ENCODE measurements at regions of chr12 and their contacts with region 1.

Region 1: DNA sequence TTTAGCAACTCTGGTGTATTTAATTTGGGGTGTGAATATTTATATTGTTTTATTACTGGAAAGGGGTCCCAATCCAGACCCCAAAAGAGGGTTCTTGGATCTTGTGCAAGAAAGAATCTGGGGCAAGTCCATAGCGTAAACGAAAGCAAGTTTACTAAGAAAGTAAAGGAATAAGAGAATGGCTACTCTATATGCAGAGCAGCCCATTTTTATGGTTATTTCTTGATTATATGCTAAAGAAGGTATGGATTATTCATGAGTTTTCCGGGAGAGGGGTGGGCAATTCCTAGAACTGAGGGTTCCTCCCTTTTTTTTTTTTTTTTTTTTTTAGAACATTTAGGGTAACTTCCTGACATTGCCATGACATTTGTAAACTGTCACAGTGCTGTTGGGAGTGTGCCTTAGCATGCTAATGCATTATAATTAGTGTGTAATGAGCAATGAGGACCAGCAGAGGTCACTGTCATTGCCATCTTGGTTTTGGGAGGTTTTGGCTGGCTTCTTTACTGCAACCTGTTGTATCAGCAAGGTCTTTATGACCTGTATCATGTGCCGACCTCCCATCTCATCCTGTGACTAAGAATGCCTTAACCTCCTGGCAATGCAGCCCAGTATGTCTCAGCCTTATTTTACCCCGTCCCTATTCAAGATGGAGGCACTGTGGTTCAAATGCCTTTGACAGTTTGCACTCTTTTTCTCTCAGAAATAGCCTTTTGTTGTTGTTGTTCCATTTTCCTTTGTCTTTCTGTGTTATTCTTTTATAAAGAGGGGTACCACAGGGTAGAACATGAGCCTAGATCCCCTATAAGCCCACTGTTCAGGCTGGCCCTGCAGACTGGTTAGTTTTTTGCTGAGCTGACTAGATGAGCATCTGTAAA is 75.5 kb upstream of the DCD start:
- DNase-seq: no peak
- H3K4me3 ChIP-seq: no peak overlapping the region
- H3K27ac ChIP-seq: no peak overlapping the region
- H3K4me1 ChIP-seq: peaks cover 0 to 5% (median 3%) of the 10 kb centered on the region in 4 experiments; a peak in 2 of 7 replicates
- H3K27me3 ChIP-seq: no peaks in the 10 kb centered on the region
- CTCF ChIP-seq: peak in 2 of 3 experiments; percentile 59 to 68; a peak in 3 of 4 replicates
- EP300 ChIP-seq: no peak
- POLR2A ChIP-seq: no peak
- RAD21 ChIP-seq: peak; percentile 21 to 39; a peak in 3 of 4 replicates

Region 2: GRCh38 chr12:54734196-54734950 is 10.8 kb after region 1 on chr12:
- CTCF ChIA-PET with region 1: interaction called, 21 read pairs
- POLR2A ChIA-PET with region 1: no interaction called
- DNase-seq: no peak
- H3K4me3 ChIP-seq: no peak overlapping the region
- H3K27ac ChIP-seq: no peak overlapping the region
- H3K4me1 ChIP-seq: peaks cover 0 to 7% (median 3%) of the 10 kb centered on the region in 4 experiments; a peak in 2 of 7 replicates
- H3K27me3 ChIP-seq: no peaks in the 10 kb centered on the region
- CTCF ChIP-seq: no peak
- EP300 ChIP-seq: no peak
- POLR2A ChIP-seq: no peak
- RAD21 ChIP-seq: no peak

Region 3: GRCh38 chr12:54740882-54741281 is 17.3 kb after region 1 on chr12:
- CTCF ChIA-PET with region 1: interaction called, 21 read pairs
- POLR2A ChIA-PET with region 1: no interaction called
- DNase-seq: no peak
- H3K4me3 ChIP-seq: no peak overlapping the region
- H3K27ac ChIP-seq: no peak overlapping the region
- H3K4me1 ChIP-seq: no peaks in the 10 kb centered on the region
- H3K27me3 ChIP-seq: no peaks in the 10 kb centered on the region
- CTCF ChIP-seq: no peak
- EP300 ChIP-seq: no peak
- POLR2A ChIP-seq: no peak
- RAD21 ChIP-seq: no peak

Region 4: GRCh38 chr12:54759751-54760150 is 36.1 kb after region 1 on chr12:
- CTCF ChIA-PET with region 1: interaction called, 12 read pairs
- POLR2A ChIA-PET with region 1: no interaction called
- DNase-seq: peak; percentile 25 to 44
- H3K4me3 ChIP-seq: no peak overlapping the region
- H3K27ac ChIP-seq: no peak overlapping the region
- H3K4me1 ChIP-seq: no peaks in the 10 kb centered on the region
- H3K27me3 ChIP-seq: no peaks in the 10 kb centered on the region
- CTCF ChIP-seq: peak in 2 of 3 experiments; percentile 73 to 90; a peak in 3 of 4 replicates
- EP300 ChIP-seq: no peak
- POLR2A ChIP-seq: no peak
- RAD21 ChIP-seq: peak; percentile 93 to 97

Region 5: DNA sequence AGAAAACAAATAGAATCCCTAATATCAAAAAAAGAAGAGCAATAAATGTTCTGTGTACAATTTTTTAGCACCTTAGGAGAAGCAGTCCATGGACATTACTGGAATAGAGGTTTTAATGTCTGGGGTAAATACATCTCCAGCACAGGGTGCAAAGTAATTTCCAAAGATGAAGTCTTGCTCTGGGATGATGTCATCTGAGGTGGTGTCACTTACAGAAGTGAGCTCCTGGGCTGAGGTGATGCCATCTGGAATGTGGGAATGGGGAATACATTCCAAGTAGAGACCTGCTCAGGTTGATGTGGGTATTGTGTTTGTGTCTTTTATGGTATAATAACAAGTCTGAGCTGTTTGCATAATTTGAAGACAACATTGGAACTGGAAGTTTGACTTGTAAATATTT is 51.8 kb after region 1 on chr12:
- CTCF ChIA-PET with region 1: no interaction called
- POLR2A ChIA-PET with region 1: no interaction called
- DNase-seq: no peak
- H3K4me3 ChIP-seq: no peak overlapping the region
- H3K27ac ChIP-seq: no peak overlapping the region
- H3K4me1 ChIP-seq: no peaks in the 10 kb centered on the region
- H3K27me3 ChIP-seq: no peaks in the 10 kb centered on the region
- CTCF ChIP-seq: no peak
- EP300 ChIP-seq: no peak
- POLR2A ChIP-seq: no peak
- RAD21 ChIP-seq: no peak

Region 6: DNA sequence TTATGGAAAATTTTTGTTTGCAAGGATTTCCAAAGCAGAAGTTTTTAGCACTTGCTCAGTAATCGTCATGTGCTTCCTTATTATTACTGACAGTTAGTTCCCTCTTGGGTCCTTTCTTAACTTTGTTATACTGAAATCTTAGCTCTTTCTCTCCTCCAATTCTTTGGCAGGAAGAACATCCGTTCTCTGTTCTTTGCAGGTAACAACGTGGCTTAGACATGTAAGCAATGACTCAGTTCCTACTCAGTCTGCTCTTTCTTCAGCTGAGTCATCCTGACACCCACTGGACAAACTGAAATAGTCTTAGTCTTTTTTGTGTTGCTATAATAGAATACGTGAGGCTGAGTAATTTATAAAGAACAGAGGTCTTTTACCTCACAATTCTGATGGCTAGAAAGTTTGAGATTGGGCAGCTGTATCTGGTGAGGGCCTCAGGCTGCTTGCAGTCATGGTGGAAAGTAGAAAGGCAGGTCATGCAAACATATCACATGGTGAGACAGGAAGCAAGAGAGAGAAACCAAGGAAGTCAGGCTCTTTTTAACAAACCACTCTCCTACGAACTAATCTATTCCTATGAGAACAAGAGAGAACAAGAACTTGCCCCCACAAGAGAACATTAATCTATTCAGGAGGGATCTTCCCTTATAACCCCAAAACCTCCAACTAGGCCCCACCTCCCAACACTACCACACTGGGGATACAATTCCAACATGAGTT is 211.8 kb after region 1 on chr12:
- CTCF ChIA-PET with region 1: no interaction called
- POLR2A ChIA-PET with region 1: no interaction called
- DNase-seq: no peak
- H3K4me3 ChIP-seq: no peak overlapping the region
- H3K27ac ChIP-seq: no peak overlapping the region
- H3K4me1 ChIP-seq: no peaks in the 10 kb centered on the region
- H3K27me3 ChIP-seq: no peaks in the 10 kb centered on the region; a peak in 1 of 7 replicates
- CTCF ChIP-seq: no peak
- EP300 ChIP-seq: no peak
- POLR2A ChIP-seq: no peak
- RAD21 ChIP-seq: 0 out of 4 replicates have a peak, but pooled peaks of 1 of the 2 experiments have one; percentile 3

Measured in H1 (cell line).